Tibial artery (tissue), 4 donors: ENCODE measurements at regions of chr5 and their contacts with region 1.

Region 1: DNA sequence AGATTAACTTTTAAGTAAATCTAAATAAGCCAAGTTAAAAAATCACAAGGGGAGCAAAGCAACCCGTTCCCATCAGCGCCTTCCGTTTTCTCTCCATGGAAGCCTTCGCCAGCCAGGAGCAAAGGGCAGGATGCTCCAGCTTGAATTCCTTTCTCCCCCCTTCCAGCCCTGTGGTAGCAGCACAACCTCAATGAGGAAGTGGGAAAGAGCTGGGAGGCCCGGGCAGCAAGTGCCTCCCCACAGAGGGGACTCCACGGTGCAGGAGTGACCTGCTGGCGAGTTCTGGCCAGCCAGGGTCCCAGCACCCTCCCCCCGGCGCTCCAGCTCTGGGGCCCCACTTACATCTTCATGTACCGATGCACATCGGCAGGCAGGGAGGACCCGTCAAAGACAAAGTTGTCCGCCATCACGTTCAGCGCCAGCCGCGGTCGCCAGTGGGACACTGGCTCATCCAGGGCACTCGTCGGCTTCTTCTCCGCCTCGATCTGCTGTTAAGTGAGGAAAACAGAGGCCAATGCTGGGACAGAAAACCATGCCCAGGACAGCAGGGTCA is 6.3 kb downstream of the CLPTM1L start:
- DNase-seq: no peak
- H3K4me3 ChIP-seq: no peak overlapping the region
- H3K27ac ChIP-seq: no peak overlapping the region
- H3K4me1 ChIP-seq: peaks cover 0 to 7% (median 5%) of the 10 kb centered on the region in 4 donors
- H3K27me3 ChIP-seq: no peaks in the 10 kb centered on the region
- CTCF ChIP-seq: no peak

Region 2: GRCh38 chr5:1385395-1386273 is 47.0 kb after region 1 on chr5:
- intact Hi-C with region 1: loop called (anchors 2 kb)
- DNase-seq: peak; percentile 80 to 89
- H3K4me3 ChIP-seq: peak overlapping the region; percentile 56 to 72
- H3K27ac ChIP-seq: peak overlapping the region; percentile 27 to 32
- H3K4me1 ChIP-seq: peaks cover 0 to 21% (median 7%) of the 10 kb centered on the region in 4 donors
- H3K27me3 ChIP-seq: peaks cover 0 to 64% of the 10 kb centered on the region in 2 donors
- CTCF ChIP-seq: no peak